WTC11 (cell line): ENCODE measurements at regions of chr12 and their contacts with region 1.

Region 1: GRCh38 chr12:119153477-119153876 is 25.3 kb upstream of the HSPB8 start:
- DNase-seq: peak; percentile 99
- ATAC-seq: peak; percentile 84
- H3K4me3 Mint-ChIP-seq: peak overlapping the region; percentile 98
- H3K27ac Mint-ChIP-seq: peak overlapping the region; percentile 99
- H3K4me1 Mint-ChIP-seq: peaks cover 19% of the 10 kb centered on the region
- H3K27me3 Mint-ChIP-seq: no peaks in the 10 kb centered on the region
- CTCF ChIP-seq: no peak

Region 2: DNA sequence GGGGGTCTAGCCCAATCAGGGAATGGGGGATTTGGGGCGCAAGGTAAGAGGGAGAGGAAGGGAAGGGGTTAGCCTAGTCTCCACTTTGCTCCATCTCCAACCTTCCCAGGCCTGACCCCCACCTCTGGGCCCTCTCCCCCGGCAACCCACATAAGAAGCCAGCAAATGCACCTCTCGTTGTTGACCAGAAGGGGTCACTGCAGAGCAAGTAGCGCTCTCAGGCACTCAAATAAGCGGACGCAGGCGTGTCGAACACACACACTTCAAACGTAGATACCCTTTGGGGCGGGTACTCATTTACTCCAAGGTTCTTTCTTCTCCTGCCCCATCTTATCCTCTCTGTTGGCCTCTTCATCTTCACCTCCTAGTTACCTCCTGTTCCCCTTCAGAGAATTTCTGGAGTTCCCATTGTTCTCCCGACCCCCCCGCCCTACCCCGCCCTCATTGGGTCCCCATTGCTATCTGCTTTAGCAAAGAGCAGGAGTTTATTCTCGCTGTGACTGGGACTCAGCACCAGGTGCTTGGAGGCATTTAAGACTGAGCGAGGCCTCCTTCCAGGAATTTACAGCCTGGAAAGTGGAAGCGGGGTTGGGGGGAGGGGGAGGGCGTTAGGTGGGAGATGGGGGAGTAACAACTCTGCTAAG is 173.6 kb before region 1 on chr12:
- CTCF ChIA-PET with region 1: interaction called, 13 read pairs
- POLR2A ChIA-PET with region 1: interaction called, 5 read pairs
- DNase-seq: peak; percentile 77
- ATAC-seq: peak; percentile 60
- H3K4me3 Mint-ChIP-seq: peak overlapping the region; percentile 78
- H3K27ac Mint-ChIP-seq: no peak overlapping the region
- H3K4me1 Mint-ChIP-seq: peaks cover 13% of the 10 kb centered on the region
- H3K27me3 Mint-ChIP-seq: peaks cover 30% of the 10 kb centered on the region
- CTCF ChIP-seq: peak; percentile 72

Region 3: GRCh38 chr12:119176267-119176849 is 22.9 kb after region 1 on chr12:
- CTCF ChIA-PET with region 1: interaction called, 24 read pairs
- POLR2A ChIA-PET with region 1: interaction called, 15 read pairs
- DNase-seq: peak; percentile 26
- ATAC-seq: no peak
- H3K4me3 Mint-ChIP-seq: no peak overlapping the region
- H3K27ac Mint-ChIP-seq: peak overlapping the region; percentile 22; the same call in 1 of the 2 replicates
- H3K4me1 Mint-ChIP-seq: peaks cover 55% of the 10 kb centered on the region
- H3K27me3 Mint-ChIP-seq: no peaks in the 10 kb centered on the region
- CTCF ChIP-seq: no peak

Region 4: GRCh38 chr12:119354179-119354953 is 200.9 kb after region 1 on chr12:
- CTCF ChIA-PET with region 1: no interaction called
- POLR2A ChIA-PET with region 1: no interaction called
- DNase-seq: no peak
- ATAC-seq: no peak
- H3K4me3 Mint-ChIP-seq: no peak overlapping the region
- H3K27ac Mint-ChIP-seq: no peak overlapping the region
- H3K4me1 Mint-ChIP-seq: no peaks in the 10 kb centered on the region
- H3K27me3 Mint-ChIP-seq: peaks cover 25% of the 10 kb centered on the region
- CTCF ChIP-seq: no peak